ENCODE measurements at regions of chr2 and their contacts with region 1.

Region 1: GRCh38 chr2:71157124-71157793 is 26.8 kb downstream of the MPHOSPH10 start:
- DNase-seq: peak; percentile 70
- ATAC-seq: peak; percentile 77
- H3K4me3 ChIP-seq: no peak overlapping the region
- H3K4me3 Mint-ChIP-seq: no peak overlapping the region
- H3K27ac ChIP-seq: no peak overlapping the region
- H3K27ac Mint-ChIP-seq: no peak overlapping the region
- H3K4me1 ChIP-seq: peaks cover 6 to 7% of the 10 kb centered on the region in 2 donors
- H3K4me1 Mint-ChIP-seq: peaks cover 5% of the 10 kb centered on the region
- H3K27me3 ChIP-seq: peaks cover 0 to 5% (median 2%) of the 10 kb centered on the region in 4 experiments
- H3K27me3 Mint-ChIP-seq: peaks cover 7% of the 10 kb centered on the region
- CTCF ChIP-seq: peak; percentile 79

Region 2: DNA sequence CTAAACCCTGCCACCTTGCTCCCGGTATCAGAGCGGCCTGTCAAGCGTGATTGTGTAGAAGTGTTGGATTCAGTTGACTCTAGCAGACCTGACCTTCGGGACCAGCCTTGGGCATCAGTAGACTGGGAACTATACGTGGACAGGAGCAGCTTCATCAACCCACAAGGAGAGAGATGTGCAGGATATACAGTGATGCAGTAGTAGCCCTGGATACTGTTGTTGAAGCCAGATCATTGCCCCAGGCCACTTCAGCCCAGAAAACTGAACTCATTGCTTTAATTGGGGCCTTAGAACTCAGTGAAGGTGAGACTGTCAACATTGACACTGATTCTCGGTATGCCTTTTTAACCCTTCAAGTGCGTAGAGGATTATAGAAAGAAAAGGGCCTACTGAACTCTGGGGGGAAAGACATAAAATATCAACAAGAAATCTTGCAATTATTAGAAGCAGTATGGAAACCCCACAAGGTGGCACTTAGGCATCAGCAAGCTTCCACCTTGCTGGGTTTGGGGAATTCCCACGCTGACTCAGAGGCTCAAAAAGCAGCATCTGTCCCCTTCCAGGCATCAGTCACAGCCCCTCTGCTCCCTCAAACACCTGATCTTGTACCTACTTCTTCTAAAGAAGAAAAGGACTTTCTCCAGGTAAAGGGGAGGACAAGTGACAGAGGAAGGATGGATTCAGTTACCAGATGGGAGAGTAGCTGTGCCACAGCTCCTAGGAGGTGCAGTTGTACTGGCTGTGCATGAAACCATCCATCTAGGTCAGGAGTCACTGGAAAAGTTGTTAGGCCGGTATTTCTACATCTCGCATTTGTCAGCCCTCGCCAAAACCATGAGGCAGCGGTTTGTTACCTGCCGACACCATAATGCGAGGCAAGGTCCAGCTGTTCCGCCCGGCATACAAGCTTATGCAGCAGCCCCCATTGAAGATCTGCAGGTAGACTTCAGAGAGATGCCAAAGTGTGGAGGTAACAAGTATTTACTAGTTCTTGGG is 107.6 kb before region 1 on chr2:
- CTCF ChIA-PET with region 1: interaction called, 6 read pairs
- POLR2A ChIA-PET with region 1: no interaction called
- intact Hi-C with region 1: loop called (anchors 1 kb)
- DNase-seq: peak; percentile 67
- ATAC-seq: peak; percentile 47
- H3K4me3 ChIP-seq: no peak overlapping the region
- H3K4me3 Mint-ChIP-seq: no peak overlapping the region
- H3K27ac ChIP-seq: no peak overlapping the region
- H3K27ac Mint-ChIP-seq: no peak overlapping the region
- H3K4me1 ChIP-seq: peaks cover 0 to 3% of the 10 kb centered on the region in 2 donors
- H3K4me1 Mint-ChIP-seq: peaks cover 3% of the 10 kb centered on the region
- H3K27me3 ChIP-seq: peaks cover 0 to 3% (median 0%) of the 10 kb centered on the region in 4 experiments
- H3K27me3 Mint-ChIP-seq: peaks cover 6% of the 10 kb centered on the region
- CTCF ChIP-seq: peak; percentile 38

Region 3: DNA sequence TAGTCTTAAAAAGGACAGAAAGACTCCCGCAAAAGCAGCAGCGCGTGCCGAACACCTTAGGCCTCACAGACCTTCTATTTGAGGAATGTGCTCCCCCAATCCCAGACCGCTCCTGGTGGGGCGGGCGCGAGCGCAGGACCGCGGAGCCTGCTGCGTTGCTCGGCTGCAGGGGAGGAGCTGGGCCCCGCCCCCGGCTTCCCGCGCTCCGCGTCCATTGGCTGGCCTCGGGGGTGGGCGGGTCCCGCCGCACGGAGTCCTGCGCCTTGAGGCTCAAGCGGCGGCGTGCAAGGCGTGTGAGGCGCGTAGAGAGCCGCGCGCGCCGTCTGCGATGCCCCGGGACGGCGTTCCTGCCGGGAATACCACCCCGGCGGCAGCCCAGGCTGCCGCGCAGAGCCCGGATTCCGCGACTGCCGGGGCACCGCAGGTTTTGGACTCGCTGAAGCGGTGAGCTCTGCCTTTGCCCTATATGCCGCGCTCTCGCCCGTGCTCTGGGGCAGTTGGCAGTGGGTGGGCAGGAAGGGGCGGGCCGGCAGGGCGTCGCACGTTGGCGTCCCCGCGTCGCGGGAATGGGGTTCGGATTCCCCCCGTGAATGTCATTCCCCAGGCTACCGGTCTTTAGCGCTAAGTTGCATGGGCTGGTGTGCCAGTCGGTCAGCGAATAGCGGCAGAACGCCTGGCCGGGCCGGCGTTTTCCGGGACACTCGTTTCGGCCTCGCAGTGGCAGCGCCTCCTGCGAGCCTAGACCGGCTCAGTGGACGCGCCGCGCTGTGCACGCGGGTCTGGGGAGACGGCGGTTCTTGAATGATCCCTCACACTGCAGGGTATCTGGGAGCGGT is 119.3 kb after region 1 on chr2:
- CTCF ChIA-PET with region 1: no interaction called
- POLR2A ChIA-PET with region 1: no interaction called
- intact Hi-C with region 1: loop called (anchors 2 kb)
- DNase-seq: peak; percentile 90
- ATAC-seq: peak; percentile 99
- H3K4me3 ChIP-seq: peak overlapping the region; percentile 23 to 77 (median 58)
- H3K4me3 Mint-ChIP-seq: peak overlapping the region; percentile 87
- H3K27ac ChIP-seq: no peak overlapping the region
- H3K27ac Mint-ChIP-seq: peak overlapping the region; percentile 24
- H3K4me1 ChIP-seq: peaks cover 18 to 19% of the 10 kb centered on the region in 2 donors
- H3K4me1 Mint-ChIP-seq: peaks cover 22% of the 10 kb centered on the region
- H3K27me3 ChIP-seq: peaks cover 0 to 19% (median 9%) of the 10 kb centered on the region in 4 experiments
- H3K27me3 Mint-ChIP-seq: peaks cover 54% of the 10 kb centered on the region
- CTCF ChIP-seq: no peak

Region 4: GRCh38 chr2:71510196-71510807 is 353.0 kb after region 1 on chr2:
- CTCF ChIA-PET with region 1: interaction called, 14 read pairs
- POLR2A ChIA-PET with region 1: no interaction called
- intact Hi-C with region 1: loop called (anchors 1 kb)
- DNase-seq: peak; percentile 73
- ATAC-seq: peak; percentile 54
- H3K4me3 ChIP-seq: no peak overlapping the region
- H3K4me3 Mint-ChIP-seq: no peak overlapping the region
- H3K27ac ChIP-seq: no peak overlapping the region
- H3K27ac Mint-ChIP-seq: no peak overlapping the region
- H3K4me1 ChIP-seq: no peaks in the 10 kb centered on the region
- H3K4me1 Mint-ChIP-seq: peaks cover 2% of the 10 kb centered on the region
- H3K27me3 ChIP-seq: no peaks in the 10 kb centered on the region
- H3K27me3 Mint-ChIP-seq: peaks cover 11% of the 10 kb centered on the region
- CTCF ChIP-seq: peak; percentile 86

Region 5: GRCh38 chr2:72846538-72847095 is 1689.4 kb after region 1 on chr2:
- CTCF ChIA-PET with region 1: no interaction called
- POLR2A ChIA-PET with region 1: no interaction called
- intact Hi-C with region 1: no loop called
- DNase-seq: no peak
- ATAC-seq: no peak
- H3K4me3 ChIP-seq: no peak overlapping the region
- H3K4me3 Mint-ChIP-seq: no peak overlapping the region
- H3K27ac ChIP-seq: no peak overlapping the region
- H3K27ac Mint-ChIP-seq: no peak overlapping the region
- H3K4me1 ChIP-seq: no peaks in the 10 kb centered on the region
- H3K4me1 Mint-ChIP-seq: no peaks in the 10 kb centered on the region
- H3K27me3 ChIP-seq: peaks cover 0 to 1% (median 0%) of the 10 kb centered on the region in 4 experiments
- H3K27me3 Mint-ChIP-seq: peaks cover 23% of the 10 kb centered on the region
- CTCF ChIP-seq: no peak

Measured in B cell (primary cell).